CD4-positive, alpha-beta T cell (primary cell): ENCODE measurements at regions of chr1 and their contacts with region 1.

Region 1: DNA sequence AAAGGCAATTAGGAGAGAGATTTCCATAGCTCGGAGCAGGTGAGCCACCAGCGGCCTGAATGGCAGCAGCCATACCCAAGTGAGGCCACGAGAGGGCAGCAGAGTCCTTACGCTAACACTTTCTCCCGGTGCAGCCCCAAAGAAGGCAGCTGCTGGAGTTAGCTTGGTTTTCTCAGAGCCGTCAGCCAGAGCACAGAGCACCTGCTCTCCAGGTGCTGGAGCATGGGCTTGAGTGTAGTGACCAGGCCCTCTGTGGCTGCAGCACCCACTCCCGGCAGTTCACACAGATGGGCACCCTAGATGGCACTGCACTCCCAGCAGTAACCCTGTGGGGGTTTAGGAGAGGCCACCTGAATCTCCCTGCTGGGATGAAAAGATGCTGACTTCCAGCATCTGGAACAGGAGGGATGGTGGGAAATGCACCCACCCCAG is 45.8 kb downstream of the TMCC2 start:
- DNase-seq: peak; percentile 81 to 92 (median 86)
- ATAC-seq: peak; percentile 83
- H3K4me3 ChIP-seq: peak overlapping the region; percentile 7
- H3K4me3 Mint-ChIP-seq: peak overlapping the region; percentile 81
- H3K27ac ChIP-seq: no peak overlapping the region
- H3K27ac Mint-ChIP-seq: peak overlapping the region; percentile 67
- H3K4me1 ChIP-seq: peaks cover 48% of the 10 kb centered on the region
- H3K4me1 Mint-ChIP-seq: peaks cover 40% of the 10 kb centered on the region
- H3K27me3 ChIP-seq: no peaks in the 10 kb centered on the region
- H3K27me3 Mint-ChIP-seq: no peaks in the 10 kb centered on the region
- CTCF ChIP-seq: peak; percentile 97

Region 2: DNA sequence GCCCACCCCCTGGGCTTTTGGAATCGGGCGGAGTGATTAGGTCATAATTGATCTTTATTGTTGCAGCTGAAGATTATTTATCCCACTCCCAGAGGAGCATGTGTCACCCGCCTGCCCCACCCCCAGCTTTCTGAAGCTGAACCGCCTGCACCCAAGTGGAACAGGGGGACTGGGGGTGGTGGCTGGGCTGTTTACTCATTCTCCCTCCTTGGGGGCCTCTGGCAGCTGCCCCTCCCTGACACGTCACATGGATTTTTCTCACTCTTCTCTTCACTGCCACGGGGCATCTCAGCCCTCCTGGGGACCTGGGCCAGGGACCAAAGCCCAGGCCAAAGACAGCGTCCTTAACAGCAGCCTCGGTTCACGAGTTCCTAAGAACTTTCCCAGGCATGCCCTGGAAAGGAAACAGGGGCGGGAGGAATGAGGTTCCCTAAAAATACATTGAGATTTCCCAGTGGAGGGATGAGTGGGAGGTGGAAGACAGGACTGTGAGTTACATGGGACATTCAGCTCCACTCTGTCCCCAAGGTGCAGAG is 1232.3 kb before region 1 on chr1:
- CTCF ChIA-PET with region 1: no interaction called
- POLR2A ChIA-PET with region 1: no interaction called
- intact Hi-C with region 1: no loop called
- DNase-seq: no peak
- ATAC-seq: no peak
- H3K4me3 ChIP-seq: no peak overlapping the region
- H3K4me3 Mint-ChIP-seq: no peak overlapping the region
- H3K27ac ChIP-seq: no peak overlapping the region
- H3K27ac Mint-ChIP-seq: no peak overlapping the region
- H3K4me1 ChIP-seq: no peaks in the 10 kb centered on the region
- H3K4me1 Mint-ChIP-seq: no peaks in the 10 kb centered on the region
- H3K27me3 ChIP-seq: no peaks in the 10 kb centered on the region
- H3K27me3 Mint-ChIP-seq: peaks cover 9% of the 10 kb centered on the region
- CTCF ChIP-seq: no peak

Region 3: GRCh38 chr1:205284343-205285144 is 11.0 kb after region 1 on chr1:
- CTCF ChIA-PET with region 1: interaction called, 139 read pairs
- POLR2A ChIA-PET with region 1: interaction called, 356 read pairs
- intact Hi-C with region 1: loop called (anchors 1 kb)
- DNase-seq: peak; percentile 73 to 97 (median 93)
- ATAC-seq: peak; percentile 66
- H3K4me3 ChIP-seq: peak overlapping the region; percentile 50
- H3K4me3 Mint-ChIP-seq: peak overlapping the region; percentile 82
- H3K27ac ChIP-seq: peak overlapping the region; percentile 72 to 90
- H3K27ac Mint-ChIP-seq: peak overlapping the region; percentile 97
- H3K4me1 ChIP-seq: peaks cover 92% of the 10 kb centered on the region
- H3K4me1 Mint-ChIP-seq: peaks cover 81% of the 10 kb centered on the region
- H3K27me3 ChIP-seq: no peaks in the 10 kb centered on the region
- H3K27me3 Mint-ChIP-seq: no peaks in the 10 kb centered on the region
- CTCF ChIP-seq: no peak

Region 4: GRCh38 chr1:205306929-205307566 is 33.5 kb after region 1 on chr1:
- CTCF ChIA-PET with region 1: interaction called, 14 read pairs
- POLR2A ChIA-PET with region 1: interaction called, 918 read pairs
- intact Hi-C with region 1: no loop called
- DNase-seq: no peak
- ATAC-seq: no peak
- H3K4me3 ChIP-seq: no peak overlapping the region
- H3K4me3 Mint-ChIP-seq: no peak overlapping the region
- H3K27ac ChIP-seq: peak overlapping the region in 1 of 2 donors; percentile 40
- H3K27ac Mint-ChIP-seq: peak overlapping the region; percentile 68
- H3K4me1 ChIP-seq: peaks cover 60% of the 10 kb centered on the region
- H3K4me1 Mint-ChIP-seq: peaks cover 55% of the 10 kb centered on the region
- H3K27me3 ChIP-seq: no peaks in the 10 kb centered on the region
- H3K27me3 Mint-ChIP-seq: no peaks in the 10 kb centered on the region
- CTCF ChIP-seq: no peak

Region 5: GRCh38 chr1:205335643-205336091 is 62.1 kb after region 1 on chr1:
- CTCF ChIA-PET with region 1: interaction called, 26 read pairs
- POLR2A ChIA-PET with region 1: interaction called, 3 read pairs
- intact Hi-C with region 1: no loop called
- DNase-seq: peak; percentile 63 to 89 (median 74)
- ATAC-seq: peak; percentile 99
- H3K4me3 ChIP-seq: no peak overlapping the region
- H3K4me3 Mint-ChIP-seq: no peak overlapping the region
- H3K27ac ChIP-seq: no peak overlapping the region
- H3K27ac Mint-ChIP-seq: no peak overlapping the region
- H3K4me1 ChIP-seq: no peaks in the 10 kb centered on the region
- H3K4me1 Mint-ChIP-seq: no peaks in the 10 kb centered on the region
- H3K27me3 ChIP-seq: no peaks in the 10 kb centered on the region
- H3K27me3 Mint-ChIP-seq: no peaks in the 10 kb centered on the region
- CTCF ChIP-seq: peak; percentile 93

Region 6: GRCh38 chr1:205365945-205366463 is 92.4 kb after region 1 on chr1:
- CTCF ChIA-PET with region 1: no interaction called
- POLR2A ChIA-PET with region 1: no interaction called
- intact Hi-C with region 1: no loop called
- DNase-seq: no peak
- ATAC-seq: no peak
- H3K4me3 ChIP-seq: no peak overlapping the region
- H3K4me3 Mint-ChIP-seq: no peak overlapping the region
- H3K27ac ChIP-seq: no peak overlapping the region
- H3K27ac Mint-ChIP-seq: no peak overlapping the region
- H3K4me1 ChIP-seq: no peaks in the 10 kb centered on the region
- H3K4me1 Mint-ChIP-seq: no peaks in the 10 kb centered on the region
- H3K27me3 ChIP-seq: no peaks in the 10 kb centered on the region
- H3K27me3 Mint-ChIP-seq: no peaks in the 10 kb centered on the region
- CTCF ChIP-seq: no peak

Region 7: DNA sequence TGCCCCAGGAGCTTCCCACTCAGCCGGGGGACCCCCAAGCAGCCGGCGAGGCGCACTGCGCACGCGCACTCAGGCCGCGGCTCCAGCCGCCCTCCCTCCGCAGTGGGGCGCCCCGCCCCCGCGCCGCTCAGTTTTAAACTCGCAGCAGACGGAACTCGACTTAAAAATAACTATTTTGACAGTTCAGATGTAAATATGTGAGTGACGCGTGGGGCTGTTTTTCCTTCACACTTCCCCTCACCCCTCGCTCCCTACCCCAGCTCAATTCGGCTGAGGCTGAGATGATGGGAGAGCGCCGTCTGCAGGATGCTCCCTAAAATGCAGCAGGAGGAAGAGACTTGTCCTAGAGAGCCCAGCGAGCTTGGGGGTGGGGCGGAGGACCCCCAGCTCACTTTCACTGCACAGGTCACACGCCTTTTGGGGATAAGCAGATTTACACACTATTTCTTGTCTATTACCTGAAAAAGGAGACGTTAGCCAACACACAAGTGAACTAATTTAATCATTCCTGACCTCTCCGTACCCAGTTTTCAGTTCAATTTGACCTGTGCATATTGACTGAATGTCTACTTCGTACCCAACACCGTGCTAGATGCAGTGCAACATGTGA is 157.2 kb after region 1 on chr1:
- CTCF ChIA-PET with region 1: no interaction called
- POLR2A ChIA-PET with region 1: no interaction called
- intact Hi-C with region 1: loop called in 1 of 2 experiments (anchors 5 kb)
- DNase-seq: peak; percentile 21 to 71 (median 48)
- ATAC-seq: peak; percentile 90
- H3K4me3 ChIP-seq: peak overlapping the region; percentile 43
- H3K4me3 Mint-ChIP-seq: peak overlapping the region; percentile 85
- H3K27ac ChIP-seq: no peak overlapping the region
- H3K27ac Mint-ChIP-seq: no peak overlapping the region
- H3K4me1 ChIP-seq: peaks cover 11% of the 10 kb centered on the region
- H3K4me1 Mint-ChIP-seq: peaks cover 7% of the 10 kb centered on the region
- H3K27me3 ChIP-seq: peaks cover 0 to 8% of the 10 kb centered on the region in 2 experiments
- H3K27me3 Mint-ChIP-seq: peaks cover 35% of the 10 kb centered on the region
- CTCF ChIP-seq: peak; percentile 60

Region 8: DNA sequence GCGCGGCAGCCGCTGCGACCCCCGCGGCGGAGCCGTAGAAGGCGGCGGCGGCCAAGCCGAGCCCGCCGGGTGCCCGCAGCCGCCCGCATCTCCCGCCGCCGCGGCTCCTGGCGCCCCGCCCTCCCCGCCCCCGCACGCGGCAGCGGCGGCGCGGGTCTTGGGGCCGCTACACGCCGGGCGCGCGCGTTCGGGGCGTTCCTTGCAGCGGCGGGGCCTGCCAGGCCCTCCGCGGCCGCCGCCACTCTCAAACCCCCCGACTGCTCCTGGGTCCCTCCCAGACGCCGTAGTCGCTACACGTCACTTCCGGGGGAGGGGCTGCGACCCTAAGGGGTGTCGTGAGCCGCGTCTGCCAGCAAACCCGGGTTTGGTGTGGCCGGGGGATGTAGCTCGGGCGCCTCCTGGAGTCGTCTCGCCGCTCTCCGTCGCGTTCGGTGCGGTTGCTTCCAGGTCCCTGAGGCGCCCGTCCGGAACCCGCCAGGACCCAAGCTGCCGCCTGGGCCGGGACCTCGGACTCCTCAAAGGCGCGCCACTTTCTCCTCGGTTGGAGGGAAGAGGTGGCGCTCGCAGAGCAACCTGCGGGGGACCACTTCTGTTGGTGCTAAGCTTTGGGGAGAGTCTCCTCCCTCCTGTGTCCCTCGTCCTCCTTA is 358.3 kb after region 1 on chr1 and contains the start of gene ELK4:
- CTCF ChIA-PET with region 1: no interaction called
- POLR2A ChIA-PET with region 1: interaction called, 4 read pairs
- intact Hi-C with region 1: loop called in 1 of 2 experiments (anchors 10 kb)
- DNase-seq: peak; percentile 99 to 100 (median 100)
- ATAC-seq: peak; percentile 79
- H3K4me3 ChIP-seq: peak within 1 kb of the TSS; percentile 81
- H3K4me3 Mint-ChIP-seq: peak within 1 kb of the TSS; percentile 94
- H3K27ac ChIP-seq: peak within 1 kb of the TSS; percentile 91 to 93
- H3K27ac Mint-ChIP-seq: peak within 1 kb of the TSS; percentile 91
- H3K4me1 ChIP-seq: peaks cover 29% of the 10 kb centered on the region
- H3K4me1 Mint-ChIP-seq: peaks cover 50% of the 10 kb centered on the region
- H3K27me3 ChIP-seq: no peaks in the 10 kb centered on the region
- H3K27me3 Mint-ChIP-seq: no peaks in the 10 kb centered on the region
- CTCF ChIP-seq: peak; percentile 75
- total RNA-seq, gene ELK4: 145 to 154 TPM